ENCODE measurements at regions of chr18 and their contacts with region 1.

Region 1: DNA sequence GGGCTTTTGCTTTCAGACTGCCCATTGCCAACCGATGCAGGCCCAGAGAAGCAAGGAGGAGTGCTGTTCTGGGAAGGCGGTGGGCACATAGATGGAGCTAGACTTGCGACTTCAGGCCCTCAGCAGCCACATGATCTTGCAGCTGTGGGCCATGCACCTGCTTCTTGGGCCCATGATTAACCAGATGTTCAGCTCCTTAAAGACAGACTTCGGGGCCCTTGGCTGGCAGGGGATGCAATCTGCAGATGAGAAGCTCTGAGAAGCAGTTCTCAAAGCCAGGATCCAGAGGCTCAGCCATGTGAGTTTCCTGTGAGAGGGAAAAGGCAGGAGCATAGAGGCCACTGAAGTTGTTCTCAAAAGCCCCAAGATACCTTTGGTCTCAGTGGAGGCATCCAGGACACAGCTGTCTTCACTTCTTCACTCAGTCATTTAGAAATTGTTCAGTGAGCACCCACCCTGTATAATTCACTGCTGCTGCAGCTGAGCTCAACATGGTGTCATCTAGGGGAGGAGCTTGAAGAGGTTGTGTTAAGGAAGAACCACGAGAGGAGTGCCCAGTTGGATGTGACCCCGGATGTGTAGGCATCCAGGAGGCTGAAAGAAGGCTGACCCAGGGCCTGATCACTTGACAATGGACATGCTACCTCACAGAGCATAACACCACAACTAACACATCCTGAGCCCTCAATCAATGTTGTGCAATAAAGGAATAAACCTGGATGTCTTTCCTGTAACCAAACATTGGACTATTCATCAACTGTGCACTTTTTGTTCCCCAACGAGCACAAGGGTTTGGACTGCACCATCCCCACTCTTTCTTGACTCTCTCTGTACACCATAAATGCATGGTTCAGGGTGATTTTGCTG is 44.7 kb upstream of the TMEM200C start:
- DNase-seq: no peak
- H3K4me3 ChIP-seq: no peak overlapping the region
- H3K27ac ChIP-seq: no peak overlapping the region
- H3K27me3 ChIP-seq: no peaks in the 10 kb centered on the region
- CTCF ChIP-seq: no peak

Region 2: GRCh38 chr18:5710247-5710646 is 229.8 kb before region 1 on chr18:
- intact Hi-C with region 1: no loop called
- DNase-seq: no peak
- H3K4me3 ChIP-seq: no peak overlapping the region
- H3K27ac ChIP-seq: peak overlapping the region in 1 of 59 donors; percentile 58
- H3K27me3 ChIP-seq: peaks cover 0 to 4% (median 0%) of the 10 kb centered on the region in 45 donors
- CTCF ChIP-seq: no peak

Region 3: DNA sequence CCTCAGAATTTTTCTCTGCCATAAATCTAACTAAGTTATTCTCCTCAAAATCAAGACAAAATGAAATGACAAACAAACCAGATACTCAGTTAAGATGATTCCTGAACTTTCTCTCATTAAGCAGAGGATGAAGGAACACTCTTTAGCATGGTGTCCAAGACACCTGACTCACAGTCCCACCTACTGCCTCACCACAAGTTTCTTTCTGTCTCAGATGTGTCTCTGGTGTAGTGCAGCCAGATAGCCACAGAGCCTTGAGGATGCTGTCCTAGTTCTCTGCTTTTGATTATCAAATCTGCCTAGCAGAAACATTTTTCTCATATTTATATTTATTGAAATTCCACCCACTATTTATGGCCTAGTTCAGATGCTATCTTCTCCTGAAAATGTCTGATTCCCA is 58.9 kb after region 1 on chr18:
- intact Hi-C with region 1: loop called in 1 of 2 experiments (anchors 10 kb)
- DNase-seq: no peak
- H3K4me3 ChIP-seq: no peak overlapping the region
- H3K27ac ChIP-seq: no peak overlapping the region
- H3K27me3 ChIP-seq: no peaks in the 10 kb centered on the region
- CTCF ChIP-seq: no peak

Region 4: DNA sequence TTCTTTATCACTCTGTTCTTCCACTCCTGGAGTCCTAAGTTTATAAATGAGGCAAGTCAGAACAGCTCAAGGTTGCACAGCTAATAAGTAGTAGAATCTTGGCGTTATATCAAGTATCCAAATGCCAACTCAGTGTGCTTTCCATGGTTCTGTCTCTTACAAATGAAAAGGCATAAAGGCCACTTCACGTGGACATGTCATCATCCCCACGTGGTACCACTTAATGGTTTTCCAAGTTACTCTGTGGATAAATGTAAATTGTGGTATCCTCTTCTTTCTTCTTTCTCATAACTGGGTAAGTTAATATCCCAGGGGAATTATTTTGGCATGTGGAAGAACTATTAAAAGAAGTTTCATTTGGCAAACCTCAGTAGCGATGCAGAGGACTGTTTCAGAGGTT is 606.2 kb after region 1 on chr18:
- intact Hi-C with region 1: no loop called
- DNase-seq: no peak
- H3K4me3 ChIP-seq: no peak overlapping the region
- H3K27ac ChIP-seq: no peak overlapping the region
- H3K27me3 ChIP-seq: peaks cover 0 to 3% (median 0%) of the 10 kb centered on the region in 45 donors
- CTCF ChIP-seq: no peak